ENCODE measurements at regions of chr17 and their contacts with region 1.

Region 1: DNA sequence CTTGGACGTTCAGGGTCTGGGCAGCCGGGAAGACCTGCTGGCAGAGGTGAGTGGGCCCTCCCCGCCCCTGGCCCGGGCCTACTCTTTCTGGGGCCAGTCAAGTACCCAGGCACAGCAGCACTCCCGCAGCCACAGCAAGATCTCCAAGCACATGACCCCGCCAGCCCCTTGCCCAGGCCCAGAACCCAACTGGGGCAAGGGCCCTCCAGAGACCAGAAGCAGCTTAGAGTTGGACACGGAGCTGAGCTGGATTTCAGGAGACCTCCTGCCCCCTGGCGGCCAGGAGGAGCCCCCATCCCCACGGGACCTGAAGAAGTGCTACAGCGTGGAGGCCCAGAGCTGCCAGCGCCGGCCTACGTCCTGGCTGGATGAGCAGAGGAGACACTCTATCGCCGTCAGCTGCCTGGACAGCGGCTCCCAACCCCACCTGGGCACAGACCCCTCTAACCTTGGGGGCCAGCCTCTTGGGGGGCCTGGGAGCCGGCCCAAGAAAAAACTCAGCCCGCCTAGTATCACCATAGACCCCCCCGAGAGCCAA is 8.6 kb upstream of the ABCC3 start:
- ATAC-seq: peak; percentile 68 to 98 (median 76)
- H3K4me3 ChIP-seq: no peak overlapping the region
- H3K27ac ChIP-seq: no peak overlapping the region
- H3K4me1 ChIP-seq: peaks cover 43 to 51% of the 10 kb centered on the region in 2 donors

Region 2: GRCh38 chr17:49995055-49995738 is 630.9 kb before region 1 on chr17 and contains the start of gene DLX3:
- in situ Hi-C with region 1: no loop called
- ATAC-seq: peak; percentile 57 to 86 (median 64)
- H3K4me3 ChIP-seq: no peak within 1 kb of the TSS
- H3K27ac ChIP-seq: no peak within 1 kb of the TSS
- H3K4me1 ChIP-seq: peaks cover 0 to 12% of the 10 kb centered on the region in 2 donors
- total RNA-seq, gene DLX3: 0.07 to 0.52 (median 0.21) TPM in 7 of 8 experiments, not detected in the other

Region 3: DNA sequence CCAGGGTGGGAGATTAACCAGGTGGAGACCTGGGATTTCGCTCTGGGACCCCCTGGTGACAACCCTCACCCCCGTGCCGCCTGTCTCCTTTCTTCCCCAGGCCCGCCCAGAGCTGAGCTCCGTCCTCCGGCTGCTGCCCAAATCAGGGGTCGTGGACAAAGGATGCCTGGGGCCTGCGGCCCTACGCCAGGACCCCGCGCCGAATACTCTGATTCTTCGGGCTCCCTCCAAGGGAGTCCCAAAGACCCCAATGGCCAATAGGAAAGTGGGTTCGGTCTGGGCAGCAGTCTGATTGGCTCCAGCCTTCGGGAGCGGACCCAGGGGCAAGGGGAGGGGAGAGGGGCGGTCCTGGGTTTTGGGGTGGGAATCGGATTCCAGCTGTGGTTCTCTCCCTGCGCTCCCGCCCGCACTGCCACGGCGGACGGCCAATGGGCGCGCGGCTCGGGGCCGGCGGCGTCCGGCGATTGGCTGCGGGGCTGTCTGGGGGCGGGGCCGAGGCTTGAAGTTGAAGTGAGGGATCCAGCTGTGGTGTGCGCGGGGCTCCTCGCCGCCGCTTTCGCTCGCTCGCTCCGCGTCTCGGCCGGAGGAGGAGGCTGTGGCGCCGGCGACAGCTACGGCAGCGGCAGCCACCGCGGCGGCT is 65.8 kb before region 1 on chr17 and contains the start of gene CACNA1G:
- in situ Hi-C with region 1: loop called in 3 of 9 experiments (anchors 5 to 10 kb)
- ATAC-seq: peak; percentile 79 to 90 (median 83)
- H3K4me3 ChIP-seq: peak within 1 kb of the TSS; percentile 37 to 46 (median 41)
- H3K27ac ChIP-seq: no peak within 1 kb of the TSS
- H3K4me1 ChIP-seq: peaks cover 51 to 62% of the 10 kb centered on the region in 2 donors
- total RNA-seq, gene CACNA1G: 0.17 to 4.2 (median 0.62) TPM

Region 4: GRCh38 chr17:50689956-50690886 is 64.1 kb after region 1 on chr17:
- in situ Hi-C with region 1: loop called in 1 of 9 experiments (anchors 10 kb)
- ATAC-seq: peak in 5 of 8 experiments; percentile 79 to 89 (median 86)
- H3K4me3 ChIP-seq: no peak overlapping the region
- H3K27ac ChIP-seq: peak overlapping the region; percentile 78 to 87
- H3K4me1 ChIP-seq: peaks cover 44 to 49% of the 10 kb centered on the region in 2 donors

Region 5: DNA sequence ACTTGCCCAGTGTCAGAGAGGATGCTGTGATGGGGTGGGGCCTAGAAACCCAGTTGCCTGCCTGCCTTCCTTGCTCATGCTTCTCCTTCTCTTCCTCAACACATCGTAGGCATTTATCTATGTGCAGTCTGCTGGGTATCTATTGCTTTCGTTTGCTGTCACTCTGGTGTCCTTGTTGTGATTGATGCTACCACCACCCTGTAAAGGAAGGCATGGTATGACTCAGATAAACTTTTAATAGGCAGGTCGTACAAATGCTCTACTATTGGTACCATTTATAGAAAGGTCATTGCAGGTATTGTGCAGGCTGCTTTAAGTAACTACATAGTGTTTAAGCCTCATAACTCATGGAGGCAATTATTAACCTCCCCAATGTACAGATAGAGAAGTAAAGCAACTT is 1003.1 kb after region 1 on chr17:
- in situ Hi-C with region 1: no loop called
- ATAC-seq: no peak
- H3K4me3 ChIP-seq: no peak overlapping the region
- H3K27ac ChIP-seq: no peak overlapping the region
- H3K4me1 ChIP-seq: no peaks in the 10 kb centered on the region